ENCODE measurements at regions of chr20 and their contacts with region 1.

Region 1: DNA sequence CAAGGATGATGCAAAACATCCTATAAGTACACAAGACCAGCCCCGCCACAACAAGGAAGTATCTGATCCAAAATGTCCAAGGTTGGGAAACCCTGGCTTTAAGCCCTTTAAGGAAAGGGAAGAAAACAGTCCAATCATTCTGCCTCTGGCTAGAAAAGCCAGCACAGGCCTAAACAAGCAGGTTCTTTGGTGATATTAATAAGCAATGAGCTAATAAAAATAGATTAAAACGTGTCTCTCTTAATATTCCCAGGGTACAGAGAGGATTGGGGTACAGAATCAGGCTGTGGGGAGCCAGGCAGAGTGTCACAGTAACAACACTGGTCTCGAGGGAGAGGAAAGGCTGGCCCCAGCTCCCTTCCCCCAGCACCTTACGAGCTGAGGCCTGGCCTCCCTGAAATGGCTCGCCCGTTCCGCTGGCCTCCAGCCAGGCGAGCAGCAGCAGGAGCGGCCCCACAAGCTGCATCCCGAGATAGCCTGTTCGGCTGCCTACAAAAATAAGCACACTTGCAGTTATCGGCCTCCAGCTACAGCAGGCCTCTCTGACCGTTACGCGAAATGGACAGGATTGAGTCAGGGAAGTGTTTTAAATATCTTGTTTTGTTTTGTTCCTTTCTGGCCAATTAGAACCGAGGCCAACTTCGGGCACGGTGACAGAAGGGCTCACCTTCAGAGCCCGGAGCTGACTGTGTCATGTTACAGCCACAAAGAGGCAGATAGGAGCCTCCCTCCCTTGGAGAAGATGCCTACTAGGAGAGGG is 4.0 kb upstream of the ZMYND8 start:
- DNase-seq: peak; percentile 77 to 95 (median 88)
- H3K4me3 ChIP-seq: peak overlapping the region in 2 of 3 donors; percentile 6 to 15
- H3K27ac ChIP-seq: peak overlapping the region; percentile 100
- H3K4me1 ChIP-seq: peaks cover 25 to 60% (median 54%) of the 10 kb centered on the region in 3 donors
- H3K27me3 ChIP-seq: no peaks in the 10 kb centered on the region
- CTCF ChIP-seq: no peak

Region 2: GRCh38 chr20:47317127-47317895 is 43.2 kb before region 1 on chr20:
- intact Hi-C with region 1: loop called (anchors 10 kb)
- DNase-seq: peak; percentile 67 to 95 (median 81)
- H3K4me3 ChIP-seq: peak overlapping the region in 1 of 3 donors; percentile 40
- H3K27ac ChIP-seq: peak overlapping the region; percentile 94 to 99
- H3K4me1 ChIP-seq: peaks cover 30 to 67% (median 61%) of the 10 kb centered on the region in 3 donors
- H3K27me3 ChIP-seq: no peaks in the 10 kb centered on the region
- CTCF ChIP-seq: no peak